ENCODE measurements at regions of chr10 and their contacts with region 1.

Region 1: DNA sequence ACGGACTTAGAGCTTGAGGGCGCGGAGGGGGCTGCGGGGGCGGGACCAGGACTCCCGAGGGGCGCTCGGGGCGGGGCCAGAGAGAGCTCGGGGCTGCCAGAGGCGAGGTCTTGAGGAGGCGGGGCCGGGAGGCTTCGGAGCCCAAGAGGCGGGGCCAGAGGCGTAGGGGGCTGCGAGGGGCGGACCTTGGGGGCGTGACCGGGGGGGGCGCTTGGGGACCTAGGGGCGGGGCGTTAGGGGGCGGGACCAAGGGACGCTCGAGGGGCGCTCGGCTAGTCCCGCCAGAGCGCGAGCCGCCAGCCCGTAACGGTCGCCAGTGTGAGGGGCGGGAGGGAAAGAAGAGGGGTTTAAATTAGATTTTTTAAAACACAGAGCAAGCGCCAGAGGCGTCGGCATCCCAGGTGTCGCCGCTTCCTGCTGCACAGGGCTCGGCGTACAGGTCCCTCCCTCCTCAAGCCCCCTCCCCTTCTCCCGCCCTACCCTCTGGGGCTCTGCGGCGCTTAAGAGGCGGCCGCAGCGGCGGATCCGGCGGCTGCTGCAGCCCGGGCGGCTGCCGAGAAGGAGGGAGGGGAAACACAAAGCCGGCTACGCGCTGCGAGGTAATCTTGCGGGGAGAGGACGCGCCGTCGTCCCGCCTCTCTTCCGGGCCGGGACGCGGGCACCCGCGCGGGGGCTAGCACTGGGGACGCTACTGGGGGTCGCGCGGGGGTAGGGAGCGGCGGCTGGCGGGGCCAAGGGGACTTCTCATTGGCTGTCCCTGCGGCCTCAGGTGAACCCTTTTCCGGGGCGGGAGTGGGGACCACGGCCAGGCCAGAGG is at the start of gene ADD3:
- DNase-seq: peak; percentile 89 to 96
- ATAC-seq: peak; percentile 79 to 93 (median 79)
- H3K4me3 ChIP-seq: peak within 1 kb of the TSS; percentile 85
- H3K4me3 Mint-ChIP-seq: no peak within 1 kb of the TSS
- H3K27ac ChIP-seq: peak within 1 kb of the TSS; percentile 78
- H3K27ac Mint-ChIP-seq: peak within 1 kb of the TSS in 1 of 2 donors; percentile 97
- H3K4me1 ChIP-seq: peaks cover 19% of the 10 kb centered on the region
- H3K4me1 Mint-ChIP-seq: peaks cover 41 to 42% of the 10 kb centered on the region in 2 donors
- H3K27me3 ChIP-seq: no peaks in the 10 kb centered on the region
- H3K27me3 Mint-ChIP-seq: no peaks in the 10 kb centered on the region
- CTCF ChIP-seq: no peak
- total RNA-seq, gene ADD3: 341 to 437 (median 344) TPM

Region 2: GRCh38 chr10:109922976-109923921 is 84.7 kb before region 1 on chr10 and contains the start of gene XPNPEP1:
- intact Hi-C with region 1: loop called (anchors 5 kb)
- DNase-seq: peak; percentile 82 to 92
- ATAC-seq: peak; percentile 94 to 99 (median 95)
- H3K4me3 ChIP-seq: peak within 1 kb of the TSS; percentile 89
- H3K4me3 Mint-ChIP-seq: peak within 1 kb of the TSS; percentile 88
- H3K27ac ChIP-seq: peak within 1 kb of the TSS; percentile 91
- H3K27ac Mint-ChIP-seq: peak within 1 kb of the TSS; percentile 80 to 89
- H3K4me1 ChIP-seq: peaks cover 41% of the 10 kb centered on the region
- H3K4me1 Mint-ChIP-seq: peaks cover 55 to 57% of the 10 kb centered on the region in 2 donors
- H3K27me3 ChIP-seq: no peaks in the 10 kb centered on the region
- H3K27me3 Mint-ChIP-seq: no peaks in the 10 kb centered on the region
- CTCF ChIP-seq: no peak
- total RNA-seq, gene XPNPEP1: 102 to 118 (median 106) TPM

Region 3: DNA sequence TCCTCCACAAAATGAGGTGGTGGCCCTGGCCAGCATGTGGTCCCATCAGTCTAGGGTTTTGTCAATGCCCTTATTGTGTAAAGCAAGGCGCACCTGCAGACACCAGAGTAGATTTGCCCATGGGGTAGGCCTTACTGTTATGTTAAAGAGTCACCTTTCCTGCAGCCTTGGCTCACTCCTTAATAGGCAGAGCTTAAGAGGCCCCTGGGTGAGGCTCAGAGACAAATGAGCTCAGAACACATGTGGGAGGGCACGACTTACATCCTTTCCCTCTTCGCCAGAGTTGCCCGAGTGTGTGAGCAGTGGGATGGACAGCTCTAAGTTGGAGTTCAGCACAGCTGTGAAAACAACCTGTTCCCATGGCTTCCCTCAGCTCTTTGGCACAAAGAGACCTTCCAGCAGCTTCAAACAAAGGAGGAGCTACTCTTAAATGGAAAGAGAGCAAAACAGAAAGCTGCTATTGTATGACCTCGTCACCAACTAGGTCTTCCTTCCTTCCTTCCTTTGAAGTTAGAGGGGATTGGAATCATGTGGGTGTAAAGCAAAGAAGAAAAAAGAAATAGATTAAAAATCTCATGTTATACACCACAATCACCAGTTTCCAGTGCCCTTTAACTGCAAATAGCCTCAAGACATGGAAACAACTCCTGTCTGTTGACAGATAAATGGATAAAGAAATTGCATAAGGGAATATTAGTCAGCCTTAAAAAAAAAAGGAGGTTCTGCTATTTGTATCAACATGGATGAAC is 72.8 kb before region 1 on chr10:
- intact Hi-C with region 1: no loop called
- DNase-seq: peak in 1 of 2 donors; percentile 48
- ATAC-seq: no peak
- H3K4me3 ChIP-seq: no peak overlapping the region
- H3K4me3 Mint-ChIP-seq: peak overlapping the region; percentile 42
- H3K27ac ChIP-seq: peak overlapping the region; percentile 22
- H3K27ac Mint-ChIP-seq: peak overlapping the region; percentile 75 to 80
- H3K4me1 ChIP-seq: peaks cover 27% of the 10 kb centered on the region
- H3K4me1 Mint-ChIP-seq: peaks cover 24 to 27% of the 10 kb centered on the region in 2 donors
- H3K27me3 ChIP-seq: no peaks in the 10 kb centered on the region
- H3K27me3 Mint-ChIP-seq: no peaks in the 10 kb centered on the region
- CTCF ChIP-seq: no peak

Region 4: DNA sequence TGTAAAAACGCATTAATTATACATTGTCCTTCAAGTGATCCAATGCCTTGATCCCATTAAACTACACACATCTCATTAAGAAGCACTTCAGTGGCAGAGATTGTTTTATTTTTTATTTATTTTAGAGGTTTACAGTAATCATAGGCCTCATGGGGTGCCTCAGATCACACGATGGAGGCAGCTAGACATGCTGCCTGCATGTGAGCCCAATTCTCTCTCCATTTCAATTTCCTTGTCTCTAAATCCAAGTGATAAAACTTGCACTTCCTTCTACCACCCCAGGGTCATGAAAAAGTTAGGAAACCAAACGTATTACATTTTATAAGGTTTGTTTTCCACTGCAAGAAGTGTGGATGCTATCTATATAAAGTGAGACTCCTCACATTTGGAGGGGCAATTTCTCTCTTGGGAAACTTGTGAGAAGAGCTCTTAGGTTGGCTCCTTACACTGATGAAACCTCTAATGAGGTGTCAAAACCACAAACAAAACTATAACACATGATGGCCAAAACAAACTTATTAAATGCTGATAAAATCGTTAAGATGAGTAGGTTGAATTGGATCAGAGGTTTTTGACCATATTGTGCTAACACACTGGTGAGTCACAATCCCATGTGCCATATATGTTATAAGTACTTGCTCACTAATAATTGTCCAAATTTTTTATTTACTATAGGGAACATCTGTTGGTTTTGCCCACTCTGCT is 62.3 kb before region 1 on chr10:
- intact Hi-C with region 1: no loop called
- DNase-seq: peak in 1 of 2 donors; percentile 47
- ATAC-seq: peak; percentile 59 to 86 (median 83)
- H3K4me3 ChIP-seq: no peak overlapping the region
- H3K4me3 Mint-ChIP-seq: peak overlapping the region; percentile 71
- H3K27ac ChIP-seq: no peak overlapping the region
- H3K27ac Mint-ChIP-seq: peak overlapping the region; percentile 64 to 82
- H3K4me1 ChIP-seq: peaks cover 10% of the 10 kb centered on the region
- H3K4me1 Mint-ChIP-seq: peaks cover 29 to 32% of the 10 kb centered on the region in 2 donors
- H3K27me3 ChIP-seq: no peaks in the 10 kb centered on the region
- H3K27me3 Mint-ChIP-seq: no peaks in the 10 kb centered on the region
- CTCF ChIP-seq: no peak

Region 5: GRCh38 chr10:109978481-109978880 is 29.4 kb before region 1 on chr10:
- intact Hi-C with region 1: no loop called
- DNase-seq: peak; percentile 55 to 82
- ATAC-seq: peak; percentile 70 to 78 (median 77)
- H3K4me3 ChIP-seq: no peak overlapping the region
- H3K4me3 Mint-ChIP-seq: no peak overlapping the region
- H3K27ac ChIP-seq: no peak overlapping the region
- H3K27ac Mint-ChIP-seq: no peak overlapping the region
- H3K4me1 ChIP-seq: no peaks in the 10 kb centered on the region
- H3K4me1 Mint-ChIP-seq: no peaks in the 10 kb centered on the region
- H3K27me3 ChIP-seq: no peaks in the 10 kb centered on the region
- H3K27me3 Mint-ChIP-seq: peaks cover 0 to 10% of the 10 kb centered on the region in 2 donors
- CTCF ChIP-seq: peak; percentile 80

Region 6: DNA sequence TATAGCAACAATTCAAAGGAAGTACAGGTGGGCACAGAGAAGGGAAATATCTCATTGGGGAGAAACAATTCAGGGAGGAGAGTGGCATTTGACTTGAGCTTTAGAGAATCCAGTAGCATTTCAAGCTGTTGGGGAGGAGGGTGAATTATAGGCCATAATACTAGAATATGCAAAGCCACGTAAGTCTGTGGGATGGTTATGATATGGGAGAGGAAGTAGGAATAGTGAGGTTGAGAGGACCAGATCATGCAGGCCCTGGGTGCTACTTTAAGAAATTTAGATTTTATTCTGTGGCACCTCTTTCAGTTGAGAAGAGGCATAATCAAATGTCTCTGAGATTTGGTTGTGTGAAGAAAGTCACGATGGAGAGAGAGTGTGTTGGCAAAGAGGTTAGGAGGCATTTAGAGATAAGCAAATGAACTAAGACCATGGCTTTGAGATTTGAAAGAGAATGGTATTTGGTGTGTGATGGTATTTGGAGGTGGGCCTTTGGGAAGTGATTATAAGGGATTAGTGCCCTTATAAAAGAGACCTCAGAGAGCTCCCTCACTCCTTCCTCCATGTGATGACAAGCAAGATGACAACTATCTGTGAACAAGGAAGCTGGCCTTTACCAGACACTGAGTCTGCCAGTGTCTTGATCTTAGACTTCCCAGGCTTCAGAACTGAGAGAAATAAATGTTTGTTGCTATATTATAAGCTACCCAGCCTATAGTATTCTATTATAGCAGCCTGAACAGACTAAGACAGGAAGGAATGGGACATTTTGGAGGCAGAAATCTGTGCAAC is 15.0 kb after region 1 on chr10:
- intact Hi-C with region 1: no loop called
- DNase-seq: no peak
- ATAC-seq: peak; percentile 48 to 52 (median 49)
- H3K4me3 ChIP-seq: no peak overlapping the region
- H3K4me3 Mint-ChIP-seq: peak overlapping the region; percentile 29
- H3K27ac ChIP-seq: peak overlapping the region; percentile 11
- H3K27ac Mint-ChIP-seq: peak overlapping the region; percentile 69 to 78
- H3K4me1 ChIP-seq: peaks cover 4% of the 10 kb centered on the region
- H3K4me1 Mint-ChIP-seq: peaks cover 65 to 71% of the 10 kb centered on the region in 2 donors
- H3K27me3 ChIP-seq: no peaks in the 10 kb centered on the region
- H3K27me3 Mint-ChIP-seq: no peaks in the 10 kb centered on the region
- CTCF ChIP-seq: no peak

Region 7: GRCh38 chr10:110042181-110042580 is 34.3 kb after region 1 on chr10:
- intact Hi-C with region 1: loop called (anchors 5 kb)
- DNase-seq: no peak
- ATAC-seq: peak in 2 of 3 donors; percentile 56 to 58
- H3K4me3 ChIP-seq: no peak overlapping the region
- H3K4me3 Mint-ChIP-seq: peak overlapping the region; percentile 31
- H3K27ac ChIP-seq: peak overlapping the region; percentile 22
- H3K27ac Mint-ChIP-seq: peak overlapping the region; percentile 81 to 86
- H3K4me1 ChIP-seq: no peaks in the 10 kb centered on the region
- H3K4me1 Mint-ChIP-seq: peaks cover 51 to 63% of the 10 kb centered on the region in 2 donors
- H3K27me3 ChIP-seq: no peaks in the 10 kb centered on the region
- H3K27me3 Mint-ChIP-seq: no peaks in the 10 kb centered on the region
- CTCF ChIP-seq: no peak

Region 8: DNA sequence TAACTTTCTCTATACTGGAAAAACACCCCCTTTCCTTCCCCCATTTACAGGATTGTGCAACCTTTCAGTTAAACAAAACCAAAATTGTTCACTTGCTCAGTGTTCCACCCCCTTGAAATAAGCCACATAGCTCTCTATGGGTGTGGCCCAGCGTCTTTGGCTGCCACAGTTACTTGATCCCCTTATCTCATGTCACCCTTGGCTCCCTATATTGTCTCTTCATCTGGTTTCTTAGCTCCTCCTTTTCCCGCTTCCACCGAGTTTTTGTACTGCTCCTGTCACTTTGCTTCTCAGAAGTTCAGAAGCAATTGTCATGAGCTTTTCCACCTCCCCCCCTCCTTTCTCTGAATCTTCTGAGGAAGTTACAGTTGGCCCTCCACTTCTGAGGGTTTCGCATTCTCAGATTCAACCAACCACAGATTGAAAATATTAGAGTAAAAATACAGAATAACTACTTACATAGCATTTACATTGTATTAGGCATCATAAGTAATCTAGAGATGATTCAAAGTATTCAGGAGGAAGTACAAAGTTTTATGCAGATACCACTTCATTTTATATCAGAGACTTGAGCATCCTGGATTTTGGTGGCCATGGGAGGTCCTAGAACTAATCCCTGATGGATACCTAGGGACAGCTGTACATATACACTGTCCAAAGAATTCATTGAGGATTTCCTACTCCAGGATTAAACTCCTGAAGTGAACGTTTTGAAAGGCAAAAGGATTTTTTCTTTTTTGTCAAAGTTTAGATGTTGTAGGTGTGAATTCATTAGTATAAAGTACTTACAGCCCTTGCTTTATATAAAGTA is 60.3 kb after region 1 on chr10:
- intact Hi-C with region 1: loop called (anchors 2 kb)
- DNase-seq: peak in 1 of 2 donors; percentile 66
- ATAC-seq: peak; percentile 56 to 81 (median 62)
- H3K4me3 ChIP-seq: no peak overlapping the region
- H3K4me3 Mint-ChIP-seq: peak overlapping the region; percentile 63
- H3K27ac ChIP-seq: peak overlapping the region; percentile 85
- H3K27ac Mint-ChIP-seq: peak overlapping the region; percentile 84 to 92
- H3K4me1 ChIP-seq: peaks cover 30% of the 10 kb centered on the region
- H3K4me1 Mint-ChIP-seq: peaks cover 67 to 79% of the 10 kb centered on the region in 2 donors
- H3K27me3 ChIP-seq: no peaks in the 10 kb centered on the region
- H3K27me3 Mint-ChIP-seq: no peaks in the 10 kb centered on the region
- CTCF ChIP-seq: no peak

Measured in natural killer cell (primary cell).